Activated T-helper 1 cell treated with anti-CD3 and anti-CD28 coated beads, Interleukin-12 subunit alpha, Interleukin-12 subunit beta, Interleukin-2, Interleukin-4 antibody, amounts not matched to agents 30 ng/mL and 10 ng/mL and 1 ng/mL, durations not matched to agents 14 hours and 24 hours and 36 hours (primary cell): ENCODE measurements at regions of chr7 and their contacts with region 1.

Region 1: DNA sequence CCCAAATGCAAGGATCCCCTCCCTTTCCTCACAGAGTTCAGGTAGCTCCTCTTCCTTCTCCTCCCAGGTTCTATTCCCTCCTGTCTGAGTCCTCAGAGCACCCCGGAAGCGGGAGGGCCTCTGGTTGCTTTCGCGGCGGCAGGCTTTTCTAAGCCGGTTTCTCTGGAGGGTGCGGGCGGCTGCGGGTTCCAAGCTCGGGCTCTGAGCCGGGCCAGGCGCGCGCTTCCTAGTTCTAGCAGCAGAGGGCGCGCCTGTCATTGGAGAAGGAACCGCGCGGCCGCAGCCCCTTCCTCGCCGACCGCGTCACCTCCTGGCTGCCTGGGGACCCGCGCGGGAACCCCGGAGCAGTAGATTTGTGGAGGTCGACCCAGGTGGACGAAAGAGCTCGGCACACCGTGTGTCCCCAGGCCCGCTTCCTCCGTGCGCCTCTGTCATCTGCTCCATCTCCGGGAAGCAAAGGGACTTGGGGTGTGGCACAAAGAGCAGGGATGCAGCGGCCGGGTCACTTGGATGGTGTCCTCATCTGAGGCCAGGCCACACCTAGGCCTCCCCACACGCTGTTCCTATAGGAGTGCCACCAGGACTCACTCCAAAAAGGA is 389.0 kb upstream of the PODXL start:
- DNase-seq: peak; percentile 19
- H3K4me3 Mint-ChIP-seq: peak overlapping the region; percentile 2
- H3K27ac Mint-ChIP-seq: no peak overlapping the region
- H3K4me1 Mint-ChIP-seq: no peaks in the 10 kb centered on the region
- H3K27me3 Mint-ChIP-seq: peaks cover 5% of the 10 kb centered on the region

Region 2: GRCh38 chr7:131843898-131844331 is 101.5 kb before region 1 on chr7:
- intact Hi-C with region 1: no loop called
- DNase-seq: no peak
- H3K4me3 Mint-ChIP-seq: no peak overlapping the region
- H3K27ac Mint-ChIP-seq: no peak overlapping the region
- H3K4me1 Mint-ChIP-seq: no peaks in the 10 kb centered on the region
- H3K27me3 Mint-ChIP-seq: peaks cover 9% of the 10 kb centered on the region

Region 3: DNA sequence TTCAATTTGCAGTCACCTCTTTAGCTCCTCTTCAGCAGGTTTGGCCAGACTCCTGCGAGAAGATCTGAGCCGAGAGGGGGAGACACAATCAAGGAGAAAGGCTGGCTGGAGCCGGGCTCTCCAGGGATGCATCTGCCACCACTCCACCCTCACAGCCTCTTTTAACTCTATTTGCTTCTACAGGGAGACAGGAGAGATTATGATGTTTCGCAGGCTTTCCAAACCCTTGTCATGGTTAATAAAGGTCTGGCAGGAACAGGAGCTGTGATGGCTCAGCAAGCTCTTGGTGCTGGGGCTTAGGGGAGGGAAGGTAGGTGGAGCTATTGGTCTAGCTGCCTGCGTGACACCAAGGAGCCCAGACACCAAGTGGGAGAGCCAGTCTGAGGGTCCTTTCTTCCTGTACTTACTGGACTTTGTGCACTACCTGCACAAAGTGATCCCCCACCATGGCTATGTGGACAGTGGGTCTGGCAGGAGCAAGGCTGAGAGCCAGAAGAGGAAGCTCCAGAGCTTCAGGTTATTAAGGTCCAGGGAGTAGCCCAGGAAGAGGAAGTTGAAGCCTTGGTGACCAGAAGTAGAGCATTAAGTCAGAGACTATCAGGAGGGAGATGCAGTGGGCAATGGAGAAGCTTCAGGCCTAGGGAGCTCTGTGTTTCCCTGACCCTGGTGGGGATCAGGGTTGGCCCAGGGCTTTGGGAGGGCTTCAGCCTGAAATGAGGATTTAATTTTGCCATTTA is 59.3 kb after region 1 on chr7:
- intact Hi-C with region 1: no loop called
- DNase-seq: no peak
- H3K4me3 Mint-ChIP-seq: no peak overlapping the region
- H3K27ac Mint-ChIP-seq: no peak overlapping the region
- H3K4me1 Mint-ChIP-seq: no peaks in the 10 kb centered on the region
- H3K27me3 Mint-ChIP-seq: peaks cover 2% of the 10 kb centered on the region

Region 4: DNA sequence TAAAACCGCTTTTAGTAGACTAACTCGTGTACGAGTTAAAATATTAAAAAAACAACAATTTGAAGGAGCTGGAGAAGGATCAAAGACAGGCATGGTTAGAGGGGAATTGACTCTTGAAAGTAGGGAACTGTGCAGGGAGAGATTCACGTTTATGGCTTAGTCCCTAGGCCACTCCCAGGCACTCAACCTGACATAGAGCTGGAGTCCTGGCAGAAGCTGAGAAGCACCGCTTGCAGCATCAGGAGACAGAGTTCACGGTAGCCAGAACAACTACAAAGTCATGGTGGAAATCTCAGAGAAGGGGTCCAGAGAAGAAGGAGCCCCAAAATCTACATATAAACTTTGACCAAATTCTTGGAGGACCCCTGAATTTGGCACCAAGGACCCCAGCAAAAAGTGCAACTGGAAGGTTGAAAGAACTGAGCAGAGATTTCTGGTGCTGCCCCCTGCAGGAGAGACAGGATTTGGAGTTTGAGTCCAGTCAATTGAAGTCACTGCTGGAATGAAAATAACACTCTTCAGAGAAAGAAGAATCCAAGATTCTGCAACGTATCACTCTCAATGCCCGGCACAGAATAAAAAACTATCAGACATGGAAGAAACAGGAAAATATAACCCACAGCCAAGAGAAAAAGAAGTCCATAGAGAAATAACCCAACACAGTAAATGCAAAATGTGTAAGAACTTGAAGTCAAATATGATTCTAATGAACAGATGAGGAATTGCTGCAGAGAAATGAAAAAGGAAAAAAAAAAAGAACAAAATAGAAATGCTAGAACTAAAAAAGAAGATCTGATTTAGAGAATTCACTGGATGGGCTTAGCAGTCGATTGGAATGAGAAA is 104.3 kb after region 1 on chr7:
- intact Hi-C with region 1: loop called (anchors 1 kb)
- DNase-seq: peak; percentile 5
- H3K4me3 Mint-ChIP-seq: no peak overlapping the region
- H3K27ac Mint-ChIP-seq: no peak overlapping the region
- H3K4me1 Mint-ChIP-seq: no peaks in the 10 kb centered on the region
- H3K27me3 Mint-ChIP-seq: peaks cover 2% of the 10 kb centered on the region